ENCODE measurements at regions of chr1 and their contacts with region 1.

Region 1: GRCh38 chr1:24828887-24829192 is 83.6 kb downstream of the CLIC4 start:
- DNase-seq: no peak
- H3K4me3 ChIP-seq: no peak overlapping the region
- H3K27ac ChIP-seq: peak overlapping the region; percentile 29 to 54
- H3K4me1 ChIP-seq: peaks cover 18% of the 10 kb centered on the region
- H3K27me3 ChIP-seq: no peaks in the 10 kb centered on the region
- CTCF ChIP-seq: no peak
- POLR2A ChIP-seq: no peak

Region 2: GRCh38 chr1:24688621-24689195 is 140.1 kb before region 1 on chr1:
- intact Hi-C with region 1: loop called (anchors 2 kb)
- DNase-seq: peak; percentile 78
- H3K4me3 ChIP-seq: no peak overlapping the region
- H3K27ac ChIP-seq: no peak overlapping the region
- H3K4me1 ChIP-seq: no peaks in the 10 kb centered on the region
- H3K27me3 ChIP-seq: no peaks in the 10 kb centered on the region
- CTCF ChIP-seq: peak; percentile 53 to 70 (median 69)
- POLR2A ChIP-seq: no peak

Measured in testis (tissue), 5 donors.